Endothelial cell of umbilical vein (primary cell): ENCODE measurements at regions of chr13 and their contacts with region 1.

Region 1: GRCh38 chr13:107407074-107407473 is 808.3 kb downstream of the LIG4 start:
- DNase-seq: peak; percentile 74
- H3K4me3 ChIP-seq: no peak overlapping the region
- H3K27ac ChIP-seq: peak overlapping the region; percentile 65
- H3K4me1 ChIP-seq: peaks cover 12% of the 10 kb centered on the region
- H3K27me3 ChIP-seq: no peaks in the 10 kb centered on the region
- CTCF ChIP-seq: no peak
- POLR2A ChIP-seq: no peak

Region 2: GRCh38 chr13:106156468-106156867 is 1250.6 kb before region 1 on chr13:
- CTCF ChIA-PET with region 1: no interaction called
- POLR2A ChIA-PET with region 1: no interaction called
- dilution Hi-C with region 1: no loop called
- intact Hi-C with region 1: no loop called
- DNase-seq: peak; percentile 70
- H3K4me3 ChIP-seq: no peak overlapping the region
- H3K27ac ChIP-seq: peak overlapping the region; percentile 59
- H3K4me1 ChIP-seq: peaks cover 24% of the 10 kb centered on the region
- H3K27me3 ChIP-seq: no peaks in the 10 kb centered on the region
- CTCF ChIP-seq: no peak
- POLR2A ChIP-seq: no peak

Region 3: GRCh38 chr13:107379407-107380155 is 27.5 kb before region 1 on chr13:
- CTCF ChIA-PET with region 1: interaction called, 3 read pairs
- POLR2A ChIA-PET with region 1: no interaction called
- dilution Hi-C with region 1: no loop called
- intact Hi-C with region 1: loop called (anchors 2 kb)
- DNase-seq: no peak
- H3K4me3 ChIP-seq: no peak overlapping the region
- H3K27ac ChIP-seq: no peak overlapping the region
- H3K4me1 ChIP-seq: peaks cover 12% of the 10 kb centered on the region
- H3K27me3 ChIP-seq: no peaks in the 10 kb centered on the region
- CTCF ChIP-seq: no peak
- POLR2A ChIP-seq: no peak

Region 4: DNA sequence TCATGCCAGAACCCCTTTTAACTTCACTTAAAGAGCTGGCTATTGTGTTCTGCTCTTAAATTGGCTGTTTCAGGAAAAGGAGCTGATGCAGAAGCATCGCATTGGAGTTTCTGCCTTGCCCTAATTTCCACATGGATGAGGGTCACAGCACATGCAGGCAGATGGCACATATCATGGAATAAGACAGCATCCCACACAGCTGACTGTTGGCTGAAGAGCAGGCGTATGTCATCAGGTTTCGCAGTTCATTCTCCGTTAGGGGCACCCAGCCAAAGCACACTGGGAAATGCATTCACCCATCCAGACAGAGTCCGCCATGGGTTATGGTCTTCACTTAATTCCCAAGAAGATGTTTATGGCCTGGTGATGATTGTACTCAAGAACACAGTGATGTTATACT is 235.8 kb after region 1 on chr13:
- CTCF ChIA-PET with region 1: no interaction called
- POLR2A ChIA-PET with region 1: no interaction called
- dilution Hi-C with region 1: no loop called
- intact Hi-C with region 1: no loop called
- DNase-seq: no peak
- H3K4me3 ChIP-seq: no peak overlapping the region
- H3K27ac ChIP-seq: no peak overlapping the region
- H3K4me1 ChIP-seq: no peaks in the 10 kb centered on the region
- H3K27me3 ChIP-seq: no peaks in the 10 kb centered on the region
- CTCF ChIP-seq: no peak
- POLR2A ChIP-seq: no peak

Region 5: GRCh38 chr13:107730813-107731212 is 323.7 kb after region 1 on chr13:
- CTCF ChIA-PET with region 1: no interaction called
- POLR2A ChIA-PET with region 1: no interaction called
- dilution Hi-C with region 1: no loop called
- intact Hi-C with region 1: no loop called
- DNase-seq: no peak
- H3K4me3 ChIP-seq: no peak overlapping the region
- H3K27ac ChIP-seq: no peak overlapping the region
- H3K4me1 ChIP-seq: no peaks in the 10 kb centered on the region
- H3K27me3 ChIP-seq: no peaks in the 10 kb centered on the region
- CTCF ChIP-seq: no peak
- POLR2A ChIP-seq: no peak